ENCODE measurements at regions of chr10 and their contacts with region 1.

Region 1: GRCh38 chr10:9209105-9209798 is 1154.8 kb downstream of the GATA3 start:
- DNase-seq: peak; percentile 86
- H3K4me3 Mint-ChIP-seq: no peak overlapping the region
- H3K27ac Mint-ChIP-seq: no peak overlapping the region
- H3K4me1 Mint-ChIP-seq: peaks cover 3% of the 10 kb centered on the region
- H3K27me3 Mint-ChIP-seq: peaks cover 2% of the 10 kb centered on the region

Region 2: GRCh38 chr10:7756360-7756992 is 1452.8 kb before region 1 on chr10:
- CTCF ChIA-PET with region 1: no interaction called
- intact Hi-C with region 1: loop called (anchors 1 kb)
- DNase-seq: peak; percentile 39
- H3K4me3 Mint-ChIP-seq: no peak overlapping the region
- H3K27ac Mint-ChIP-seq: no peak overlapping the region
- H3K4me1 Mint-ChIP-seq: no peaks in the 10 kb centered on the region
- H3K27me3 Mint-ChIP-seq: no peaks in the 10 kb centered on the region

Region 3: DNA sequence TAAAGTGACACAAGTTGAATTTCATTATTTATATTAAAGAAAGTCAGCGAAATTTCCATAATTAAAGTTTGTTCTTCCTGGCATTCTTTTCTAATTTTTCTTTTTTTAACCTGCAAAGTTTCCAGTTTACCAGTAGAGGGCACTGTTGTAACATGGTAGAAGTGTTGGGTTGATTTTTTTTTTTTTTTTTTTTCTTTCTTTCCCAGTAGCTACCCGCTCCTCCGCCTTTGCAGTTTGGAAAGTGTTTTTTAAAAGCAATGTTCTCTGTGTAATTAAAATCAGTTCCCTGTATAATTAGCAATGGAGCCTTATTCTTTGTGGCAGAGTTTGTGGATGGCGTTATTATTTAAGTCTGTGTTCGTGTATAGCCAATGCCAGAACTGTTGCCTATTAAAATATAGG is 1337.2 kb before region 1 on chr10:
- CTCF ChIA-PET with region 1: interaction called, 5 read pairs
- intact Hi-C with region 1: loop called (anchors 1 kb)
- DNase-seq: no peak
- H3K4me3 Mint-ChIP-seq: peak overlapping the region; percentile 64
- H3K27ac Mint-ChIP-seq: no peak overlapping the region
- H3K4me1 Mint-ChIP-seq: peaks cover 6% of the 10 kb centered on the region
- H3K27me3 Mint-ChIP-seq: no peaks in the 10 kb centered on the region

Region 4: DNA sequence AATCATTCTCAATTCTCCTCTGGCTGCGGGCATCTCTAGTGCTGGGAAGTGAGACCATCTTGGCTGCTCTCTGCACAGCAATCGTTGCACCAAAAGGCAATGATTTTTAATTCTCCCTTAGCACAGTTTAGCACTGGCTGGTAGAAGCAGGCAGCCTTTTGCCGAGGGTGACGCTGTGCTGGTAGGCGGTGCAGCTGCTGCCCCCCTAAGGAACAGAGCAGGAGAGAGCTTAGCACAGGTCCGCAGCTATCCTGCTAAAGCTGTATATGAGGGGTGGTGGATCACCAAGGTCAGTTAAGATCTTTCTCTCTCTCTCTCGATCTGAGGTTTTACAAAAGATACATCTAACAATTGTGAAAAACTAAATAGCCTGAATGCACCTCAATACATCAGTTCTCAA is 764.6 kb before region 1 on chr10:
- CTCF ChIA-PET with region 1: no interaction called
- intact Hi-C with region 1: loop called (anchors 1 kb)
- DNase-seq: peak; percentile 61
- H3K4me3 Mint-ChIP-seq: no peak overlapping the region
- H3K27ac Mint-ChIP-seq: no peak overlapping the region
- H3K4me1 Mint-ChIP-seq: peaks cover 9% of the 10 kb centered on the region
- H3K27me3 Mint-ChIP-seq: no peaks in the 10 kb centered on the region